Activated naive CD8-positive, alpha-beta T cell treated with anti-CD3 and anti-CD28 coated beads, Interleukin-2, amount 10 ng/mL, durations not matched to agents 7 days and 5 days (primary cell): ENCODE measurements at regions of chr1 and their contacts with region 1.

Region 1: DNA sequence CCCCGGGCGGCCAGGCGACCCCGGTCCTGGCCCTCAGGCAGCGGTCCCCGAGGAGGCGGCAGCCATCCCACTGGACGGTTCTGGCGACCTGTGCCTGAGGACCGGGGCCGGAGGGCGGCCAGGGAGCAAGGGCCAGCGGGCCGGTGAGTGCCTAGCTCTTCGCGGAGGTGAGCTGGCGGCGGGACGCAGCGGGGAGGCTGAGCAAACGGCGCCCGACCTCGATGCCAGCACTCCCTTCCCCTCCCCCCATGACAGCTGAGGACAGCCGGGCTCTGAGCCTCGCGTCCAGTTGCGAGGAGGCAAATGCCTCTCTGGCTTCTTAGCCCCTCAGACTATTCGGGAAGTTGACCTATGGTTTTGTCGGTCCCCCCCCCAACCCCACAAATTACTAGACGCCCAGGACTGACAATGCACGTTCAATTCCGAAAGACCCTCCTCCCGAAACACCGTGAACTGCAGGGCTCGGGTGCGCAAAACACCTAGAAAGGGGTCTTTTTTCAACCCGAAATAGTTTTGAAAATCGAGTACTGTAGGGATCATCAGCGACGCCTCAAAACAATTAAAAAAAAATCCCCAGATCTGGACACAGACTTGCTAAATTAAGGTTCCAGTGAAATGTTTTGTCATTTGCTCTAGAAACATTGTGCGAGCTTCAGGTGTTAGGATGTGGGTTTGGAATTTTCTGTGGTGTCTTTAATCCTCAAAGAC is 8.3 kb downstream of the CDKN2C start:
- DNase-seq: no peak
- ATAC-seq: peak; percentile 49
- H3K4me3 Mint-ChIP-seq: peak overlapping the region; percentile 74
- H3K27ac Mint-ChIP-seq: peak overlapping the region; percentile 82
- H3K4me1 Mint-ChIP-seq: peaks cover 26% of the 10 kb centered on the region
- H3K27me3 Mint-ChIP-seq: peaks cover 37% of the 10 kb centered on the region

Region 2: DNA sequence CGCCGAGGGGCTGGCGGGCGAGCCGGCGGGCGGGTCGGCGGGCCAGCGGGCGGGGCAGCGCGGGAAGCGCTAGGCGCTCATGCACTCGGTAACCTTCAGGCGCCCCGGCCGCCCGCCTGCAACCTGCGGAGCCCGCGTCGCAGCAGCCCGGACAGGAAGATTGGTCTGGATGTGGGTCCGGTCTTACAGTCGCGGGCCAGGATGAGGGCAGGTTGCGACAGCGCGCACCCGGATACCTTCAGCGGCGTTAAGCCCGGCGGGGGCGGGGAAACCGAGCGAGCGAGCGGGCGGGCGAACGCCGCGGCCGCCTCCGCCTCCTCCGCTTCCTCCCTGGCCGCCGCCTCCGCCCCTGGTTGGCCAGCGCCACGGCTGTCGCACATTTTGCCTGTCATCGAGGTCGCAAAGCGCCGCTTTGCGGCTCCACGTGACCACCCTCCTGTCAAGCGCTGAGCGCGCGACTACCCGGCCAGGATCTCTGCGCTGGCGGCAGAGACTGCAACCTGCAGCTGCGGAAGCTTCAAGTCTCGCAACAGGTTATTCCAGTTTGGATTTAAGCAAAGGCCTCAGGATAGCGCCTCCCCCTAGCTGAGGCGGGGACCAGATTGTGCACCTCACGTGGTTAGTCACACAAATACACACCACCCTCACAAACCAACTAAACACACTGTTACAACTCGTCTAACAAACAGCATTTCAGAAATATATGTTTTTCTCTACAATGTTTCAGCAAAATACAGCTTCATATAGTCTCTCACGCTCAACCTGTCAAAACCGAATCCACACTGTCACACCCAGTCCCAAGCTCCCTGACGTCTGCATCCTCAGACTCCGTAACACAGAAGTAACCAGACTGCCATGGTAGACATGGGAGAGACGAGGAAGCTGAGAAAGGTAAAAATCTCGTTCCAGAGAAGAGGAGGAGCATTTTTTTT is 18.1 kb before region 1 on chr1 and contains the start of gene FAF1:
- POLR2A ChIA-PET with region 1: interaction called, 45 read pairs
- DNase-seq: peak; percentile 98
- ATAC-seq: peak; percentile 91
- H3K4me3 Mint-ChIP-seq: peak within 1 kb of the TSS; percentile 97
- H3K27ac Mint-ChIP-seq: peak within 1 kb of the TSS; percentile 94
- H3K4me1 Mint-ChIP-seq: peaks cover 18% of the 10 kb centered on the region
- H3K27me3 Mint-ChIP-seq: peaks cover 2% of the 10 kb centered on the region
- total RNA-seq, gene FAF1: 70.3 to 75.2 TPM

Region 3: GRCh38 chr1:50968158-50968820 is 10.0 kb before region 1 on chr1:
- POLR2A ChIA-PET with region 1: interaction called, 108 read pairs
- DNase-seq: peak; percentile 91
- ATAC-seq: peak; percentile 79
- H3K4me3 Mint-ChIP-seq: peak overlapping the region; percentile 99
- H3K27ac Mint-ChIP-seq: peak overlapping the region; percentile 100
- H3K4me1 Mint-ChIP-seq: peaks cover 12% of the 10 kb centered on the region
- H3K27me3 Mint-ChIP-seq: peaks cover 4% of the 10 kb centered on the region

Region 4: GRCh38 chr1:51009381-51009780 is 31.1 kb after region 1 on chr1:
- POLR2A ChIA-PET with region 1: no interaction called
- DNase-seq: no peak
- ATAC-seq: no peak
- H3K4me3 Mint-ChIP-seq: no peak overlapping the region
- H3K27ac Mint-ChIP-seq: no peak overlapping the region
- H3K4me1 Mint-ChIP-seq: no peaks in the 10 kb centered on the region
- H3K27me3 Mint-ChIP-seq: peaks cover 7% of the 10 kb centered on the region

Region 5: GRCh38 chr1:51032902-51033301 is 54.6 kb after region 1 on chr1:
- POLR2A ChIA-PET with region 1: no interaction called
- DNase-seq: no peak
- ATAC-seq: no peak
- H3K4me3 Mint-ChIP-seq: no peak overlapping the region
- H3K27ac Mint-ChIP-seq: no peak overlapping the region
- H3K4me1 Mint-ChIP-seq: no peaks in the 10 kb centered on the region
- H3K27me3 Mint-ChIP-seq: peaks cover 24% of the 10 kb centered on the region

Region 6: GRCh38 chr1:51303751-51304251 is 325.5 kb after region 1 on chr1:
- POLR2A ChIA-PET with region 1: no interaction called
- DNase-seq: no peak
- ATAC-seq: no peak
- H3K4me3 Mint-ChIP-seq: no peak overlapping the region
- H3K27ac Mint-ChIP-seq: peak overlapping the region; percentile 45
- H3K4me1 Mint-ChIP-seq: peaks cover 12% of the 10 kb centered on the region
- H3K27me3 Mint-ChIP-seq: no peaks in the 10 kb centered on the region